Naive thymus-derived CD4-positive, alpha-beta T cell (primary cell): ENCODE measurements at regions of chr7 and their contacts with region 1.

Region 1: DNA sequence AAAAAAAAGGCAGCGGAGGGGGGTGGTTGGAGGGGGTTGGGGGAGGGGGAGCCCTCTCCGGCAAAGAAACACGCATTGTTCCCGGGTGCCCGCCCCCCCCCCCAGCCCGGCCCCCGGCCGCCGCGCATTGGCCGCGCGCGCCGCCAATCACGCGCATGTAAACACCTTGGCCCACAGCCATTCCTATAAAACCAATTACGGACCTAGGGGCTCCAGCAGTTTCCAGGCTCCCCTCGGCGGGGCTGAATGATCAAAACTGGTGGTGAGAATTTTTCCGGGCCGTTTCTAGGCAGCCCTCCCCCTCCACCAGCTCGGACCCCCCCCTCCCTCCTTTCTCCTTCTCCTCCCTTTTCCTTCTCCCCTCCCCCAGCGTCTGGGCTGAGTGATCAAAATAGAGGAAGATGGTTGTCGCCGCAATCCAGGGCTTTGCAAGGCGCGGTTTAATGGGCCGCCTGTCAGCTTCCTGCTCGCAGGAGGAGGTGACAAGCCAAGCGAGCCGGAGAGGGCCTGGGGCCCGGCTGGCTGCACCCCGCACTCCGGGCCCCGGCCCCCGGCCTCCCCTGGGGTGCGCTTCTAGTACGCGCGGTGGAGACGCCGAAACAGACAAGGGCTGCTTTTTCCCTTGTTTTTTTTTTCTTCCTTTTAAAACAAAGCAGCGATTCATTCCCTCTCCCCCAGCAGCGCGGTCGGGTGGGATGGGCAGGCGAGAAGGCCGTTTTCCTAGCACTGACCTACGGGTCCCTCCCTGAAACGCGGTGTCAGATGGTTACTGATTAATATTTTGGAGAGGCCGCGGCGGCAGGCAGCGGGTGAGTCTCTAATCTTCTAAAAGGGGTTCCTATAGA is 432 bp upstream of the TNRC18 start:
- DNase-seq: peak in 6 of 9 donors; percentile 17 to 53 (median 40)
- ATAC-seq: peak; percentile 69
- H3K4me3 ChIP-seq: no peak overlapping the region
- H3K4me3 Mint-ChIP-seq: peak overlapping the region; percentile 74 to 90 (median 84)
- H3K27ac ChIP-seq: no peak overlapping the region
- H3K27ac Mint-ChIP-seq: peak overlapping the region in 3 of 9 donors; percentile 34 to 90 (median 81)
- H3K4me1 ChIP-seq: peaks cover 34 to 66% of the 10 kb centered on the region in 2 donors
- H3K4me1 Mint-ChIP-seq: peaks cover 25 to 53% (median 32%) of the 10 kb centered on the region in 7 donors
- H3K27me3 ChIP-seq: peaks cover 29 to 58% of the 10 kb centered on the region in 2 donors
- H3K27me3 Mint-ChIP-seq: peaks cover 36 to 78% (median 47%) of the 10 kb centered on the region in 5 donors

Region 2: DNA sequence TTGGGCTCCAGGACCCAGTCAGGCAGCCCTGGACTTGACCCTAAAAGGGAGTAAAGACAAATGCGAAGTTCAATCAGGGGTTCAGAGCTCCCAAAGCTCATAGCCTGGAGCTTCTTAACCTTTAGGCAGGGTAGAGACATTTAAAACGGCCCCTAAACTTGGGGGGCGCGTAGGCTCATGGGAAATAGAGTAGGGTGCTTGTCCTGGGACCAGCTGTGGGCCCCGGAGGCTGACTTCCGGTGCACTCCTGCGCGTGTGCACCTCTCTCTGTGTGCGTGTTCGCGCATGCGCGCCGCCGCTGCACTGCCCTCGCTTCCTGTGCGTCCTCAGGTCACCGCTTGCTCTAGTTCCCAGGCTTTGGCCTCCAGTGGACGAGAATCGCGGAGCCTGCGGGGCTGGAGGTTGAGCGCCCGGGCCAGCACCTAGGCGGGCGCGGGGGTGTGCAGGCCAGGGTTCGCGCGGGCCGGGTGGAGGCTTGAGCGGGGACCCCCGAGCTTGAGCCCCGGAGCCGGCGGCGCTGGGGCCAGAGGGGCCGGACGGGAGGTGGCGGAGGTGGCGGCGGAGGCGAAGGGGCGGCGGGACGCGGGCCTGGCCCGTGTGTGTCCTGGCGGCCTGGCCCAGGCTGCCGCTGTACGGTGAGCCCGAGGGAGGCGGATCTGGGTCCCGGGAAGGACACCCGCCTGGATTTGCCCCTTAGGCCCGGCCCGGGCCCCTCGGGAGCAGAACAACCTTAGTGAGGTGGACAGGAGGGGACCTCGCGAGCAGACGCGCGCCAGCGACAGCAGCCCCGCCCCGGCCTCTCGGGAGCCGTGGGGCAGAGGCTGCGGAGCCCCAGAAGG is 378.3 kb before region 1 on chr7 and contains the start of gene RBAK:
- CTCF ChIA-PET with region 1: no interaction called
- POLR2A ChIA-PET with region 1: no interaction called
- intact Hi-C with region 1: loop called in 1 of 2 experiments (anchors 5 kb)
- DNase-seq: peak; percentile 74 to 91 (median 86)
- ATAC-seq: peak; percentile 100
- H3K4me3 ChIP-seq: peak within 1 kb of the TSS; percentile 76
- H3K4me3 Mint-ChIP-seq: peak within 1 kb of the TSS; percentile 92 to 98 (median 96)
- H3K27ac ChIP-seq: peak within 1 kb of the TSS; percentile 95
- H3K27ac Mint-ChIP-seq: peak within 1 kb of the TSS; percentile 82 to 97 (median 92)
- H3K4me1 ChIP-seq: peaks cover 4 to 7% of the 10 kb centered on the region in 2 donors
- H3K4me1 Mint-ChIP-seq: peaks cover 16 to 57% (median 51%) of the 10 kb centered on the region in 7 donors
- H3K27me3 ChIP-seq: no peaks in the 10 kb centered on the region
- H3K27me3 Mint-ChIP-seq: peaks cover 0 to 2% (median 0%) of the 10 kb centered on the region in 5 donors
- total RNA-seq, gene RBAK: 11.8 to 21.8 (median 17.5) TPM

Region 3: GRCh38 chr7:5064391-5065106 is 359.5 kb before region 1 on chr7:
- CTCF ChIA-PET with region 1: no interaction called
- POLR2A ChIA-PET with region 1: no interaction called
- intact Hi-C with region 1: loop called in 1 of 2 experiments (anchors 5 kb)
- DNase-seq: no peak
- ATAC-seq: no peak
- H3K4me3 ChIP-seq: peak overlapping the region; percentile 8
- H3K4me3 Mint-ChIP-seq: peak overlapping the region in 3 of 10 donors; percentile 25 to 52 (median 38)
- H3K27ac ChIP-seq: no peak overlapping the region
- H3K27ac Mint-ChIP-seq: peak overlapping the region in 2 of 9 donors; percentile 14 to 59
- H3K4me1 ChIP-seq: no peaks in the 10 kb centered on the region
- H3K4me1 Mint-ChIP-seq: no peaks in the 10 kb centered on the region
- H3K27me3 ChIP-seq: no peaks in the 10 kb centered on the region
- H3K27me3 Mint-ChIP-seq: peaks cover 0 to 2% (median 0%) of the 10 kb centered on the region in 5 donors

Region 4: DNA sequence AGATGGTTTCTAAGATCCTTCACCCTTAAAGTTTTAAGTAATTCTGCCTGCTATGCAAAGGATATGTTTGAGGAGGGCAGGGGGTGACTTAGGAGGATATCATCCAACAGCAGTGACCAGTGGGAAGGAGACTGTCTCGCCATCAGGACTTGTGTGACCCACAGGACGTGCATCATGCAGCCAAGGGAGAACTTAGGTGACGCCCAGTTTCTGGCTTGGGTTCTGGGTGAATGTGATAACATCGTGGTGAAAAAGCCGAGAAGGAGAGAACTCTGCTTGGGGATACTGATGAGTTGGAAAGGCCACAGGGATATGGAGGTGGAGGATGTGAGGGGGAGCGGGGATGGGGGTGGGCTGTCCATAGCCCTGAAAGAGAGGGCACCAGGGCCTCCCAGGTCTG is 230.2 kb before region 1 on chr7:
- CTCF ChIA-PET with region 1: no interaction called
- POLR2A ChIA-PET with region 1: no interaction called
- intact Hi-C with region 1: no loop called
- DNase-seq: no peak
- ATAC-seq: no peak
- H3K4me3 ChIP-seq: no peak overlapping the region
- H3K4me3 Mint-ChIP-seq: peak overlapping the region in 1 of 10 donors; percentile 42
- H3K27ac ChIP-seq: no peak overlapping the region
- H3K27ac Mint-ChIP-seq: peak overlapping the region in 2 of 9 donors; percentile 14 to 37
- H3K4me1 ChIP-seq: peaks cover 14 to 19% of the 10 kb centered on the region in 2 donors
- H3K4me1 Mint-ChIP-seq: peaks cover 24 to 54% (median 42%) of the 10 kb centered on the region in 7 donors
- H3K27me3 ChIP-seq: no peaks in the 10 kb centered on the region
- H3K27me3 Mint-ChIP-seq: no peaks in the 10 kb centered on the region